CD8-positive, alpha-beta T cell (primary cell): ENCODE measurements at regions of chr6 and their contacts with region 1.

Region 1: DNA sequence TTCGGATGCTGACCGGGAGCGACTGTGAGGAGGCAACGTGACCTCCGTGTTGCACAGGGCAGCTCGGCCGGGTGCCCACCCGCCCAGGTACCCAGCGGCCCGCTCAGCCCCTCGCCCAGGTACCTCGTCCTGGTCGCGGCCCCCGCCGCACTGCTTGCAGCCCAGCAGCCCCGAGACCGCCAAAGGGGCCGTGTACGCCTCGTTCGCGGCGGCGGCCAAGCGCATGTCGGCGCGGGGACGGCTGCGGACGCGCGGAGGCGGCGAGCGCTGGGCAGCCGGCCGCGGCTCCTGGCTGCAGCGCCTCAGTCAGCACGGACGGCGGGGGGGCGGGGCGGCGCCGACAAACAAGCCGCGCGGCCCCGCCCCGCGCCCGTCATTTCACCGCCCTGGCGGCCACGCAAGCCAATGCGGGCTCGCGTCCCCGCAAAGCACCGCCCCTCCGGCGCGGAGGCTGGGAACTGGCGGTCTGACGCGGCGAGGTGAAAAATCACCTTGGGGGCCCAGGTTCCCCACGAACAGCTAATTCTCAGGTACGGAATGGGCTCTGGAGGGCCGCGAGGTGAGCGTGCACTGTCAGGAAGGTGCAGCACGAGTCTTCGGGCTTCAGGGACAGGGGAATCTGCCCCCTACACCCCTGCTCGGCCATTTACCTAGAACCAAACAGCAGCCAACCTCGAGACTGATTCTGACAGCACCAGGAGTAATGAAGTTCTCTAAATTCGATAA is 85.2 kb downstream of the SESN1 start:
- DNase-seq: peak; percentile 83 to 96 (median 93)
- ATAC-seq: peak; percentile 96
- H3K4me3 ChIP-seq: peak overlapping the region; percentile 72 to 94
- H3K4me3 Mint-ChIP-seq: peak overlapping the region; percentile 98
- H3K27ac ChIP-seq: peak overlapping the region; percentile 89 to 92
- H3K27ac Mint-ChIP-seq: peak overlapping the region; percentile 100
- H3K4me1 ChIP-seq: peaks cover 53% of the 10 kb centered on the region
- H3K4me1 Mint-ChIP-seq: peaks cover 71% of the 10 kb centered on the region
- H3K27me3 ChIP-seq: no peaks in the 10 kb centered on the region
- H3K27me3 Mint-ChIP-seq: no peaks in the 10 kb centered on the region
- CTCF ChIP-seq: no peak

Region 2: GRCh38 chr6:108541838-108542759 is 467.3 kb before region 1 on chr6:
- CTCF ChIA-PET with region 1: interaction called, 8 read pairs
- POLR2A ChIA-PET with region 1: no interaction called
- intact Hi-C with region 1: loop called in 1 of 2 experiments (anchors 5 kb)
- DNase-seq: peak; percentile 39 to 87 (median 69)
- ATAC-seq: peak; percentile 92
- H3K4me3 ChIP-seq: no peak overlapping the region
- H3K4me3 Mint-ChIP-seq: no peak overlapping the region
- H3K27ac ChIP-seq: no peak overlapping the region
- H3K27ac Mint-ChIP-seq: no peak overlapping the region
- H3K4me1 ChIP-seq: peaks cover 12% of the 10 kb centered on the region
- H3K4me1 Mint-ChIP-seq: peaks cover 16% of the 10 kb centered on the region
- H3K27me3 ChIP-seq: no peaks in the 10 kb centered on the region
- H3K27me3 Mint-ChIP-seq: no peaks in the 10 kb centered on the region
- CTCF ChIP-seq: peak; percentile 95

Region 3: GRCh38 chr6:108904741-108905140 is 104.7 kb before region 1 on chr6:
- CTCF ChIA-PET with region 1: no interaction called
- POLR2A ChIA-PET with region 1: interaction called, 5 read pairs
- intact Hi-C with region 1: loop called in 1 of 2 experiments (anchors 5 kb)
- DNase-seq: peak in 2 of 9 experiments; percentile 47 to 48
- ATAC-seq: no peak
- H3K4me3 ChIP-seq: no peak overlapping the region
- H3K4me3 Mint-ChIP-seq: no peak overlapping the region
- H3K27ac ChIP-seq: no peak overlapping the region
- H3K27ac Mint-ChIP-seq: no peak overlapping the region
- H3K4me1 ChIP-seq: peaks cover 14% of the 10 kb centered on the region
- H3K4me1 Mint-ChIP-seq: peaks cover 29% of the 10 kb centered on the region
- H3K27me3 ChIP-seq: no peaks in the 10 kb centered on the region
- H3K27me3 Mint-ChIP-seq: no peaks in the 10 kb centered on the region
- CTCF ChIP-seq: no peak

Region 4: DNA sequence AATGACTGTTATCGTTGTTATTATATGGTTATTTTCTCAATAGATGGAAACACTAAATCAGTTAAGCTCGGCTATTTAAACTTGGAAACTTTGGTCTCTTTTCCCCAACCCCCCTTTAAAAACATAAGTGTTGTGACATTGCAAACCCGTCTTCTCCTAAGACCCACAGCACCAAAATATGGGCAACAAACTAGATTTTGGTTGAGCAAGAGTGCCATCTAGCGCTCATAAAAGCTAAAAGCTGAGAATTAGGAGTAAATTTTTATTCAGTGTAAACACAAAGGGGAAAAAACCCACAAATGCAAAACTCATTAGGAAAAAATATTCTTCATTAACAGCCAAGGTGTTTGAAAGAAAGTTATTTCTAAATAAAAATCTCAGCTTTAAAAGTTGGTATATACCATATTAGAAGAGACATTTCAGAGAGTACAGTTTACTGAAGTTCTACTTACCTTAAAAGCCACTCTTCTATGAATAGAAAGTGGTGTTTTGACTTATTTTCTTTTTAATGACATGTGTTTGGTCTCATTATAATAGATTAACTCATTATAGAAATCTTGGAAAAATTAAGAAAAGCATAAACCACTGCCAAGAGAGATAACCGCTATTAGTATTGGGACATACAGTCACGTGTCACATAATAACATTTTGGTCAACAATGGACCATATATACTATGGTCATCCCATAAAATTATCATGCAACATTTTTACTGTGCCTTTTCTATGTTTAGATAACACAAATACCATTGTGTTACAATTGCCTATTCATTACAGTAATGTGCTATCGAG is 64.1 kb after region 1 on chr6:
- CTCF ChIA-PET with region 1: interaction called, 19 read pairs
- POLR2A ChIA-PET with region 1: interaction called, 13 read pairs
- intact Hi-C with region 1: loop called (anchors 1 to 5 kb)
- DNase-seq: peak in 8 of 9 experiments; percentile 8 to 87 (median 50)
- ATAC-seq: peak; percentile 69
- H3K4me3 ChIP-seq: no peak overlapping the region
- H3K4me3 Mint-ChIP-seq: no peak overlapping the region
- H3K27ac ChIP-seq: no peak overlapping the region
- H3K27ac Mint-ChIP-seq: no peak overlapping the region
- H3K4me1 ChIP-seq: peaks cover 23% of the 10 kb centered on the region
- H3K4me1 Mint-ChIP-seq: peaks cover 33% of the 10 kb centered on the region
- H3K27me3 ChIP-seq: no peaks in the 10 kb centered on the region
- H3K27me3 Mint-ChIP-seq: no peaks in the 10 kb centered on the region
- CTCF ChIP-seq: peak; percentile 91

Region 5: GRCh38 chr6:109455502-109456282 is 446.3 kb after region 1 on chr6 and contains the start of gene MICAL1:
- CTCF ChIA-PET with region 1: no interaction called
- POLR2A ChIA-PET with region 1: no interaction called
- intact Hi-C with region 1: loop called in 1 of 2 experiments (anchors 10 kb)
- DNase-seq: peak; percentile 53 to 91 (median 77)
- ATAC-seq: peak; percentile 58
- H3K4me3 ChIP-seq: peak within 1 kb of the TSS; percentile 93 to 99
- H3K4me3 Mint-ChIP-seq: peak within 1 kb of the TSS; percentile 97
- H3K27ac ChIP-seq: peak within 1 kb of the TSS; percentile 89 to 98
- H3K27ac Mint-ChIP-seq: peak within 1 kb of the TSS; percentile 98
- H3K4me1 ChIP-seq: peaks cover 55% of the 10 kb centered on the region
- H3K4me1 Mint-ChIP-seq: peaks cover 65% of the 10 kb centered on the region
- H3K27me3 ChIP-seq: no peaks in the 10 kb centered on the region
- H3K27me3 Mint-ChIP-seq: no peaks in the 10 kb centered on the region
- CTCF ChIP-seq: no peak
- total RNA-seq, gene MICAL1: 68.0 to 76.4 TPM